Posterior vena cava (tissue), 2 donors: ENCODE measurements at regions of chr11 and their contacts with region 1.

Region 1: DNA sequence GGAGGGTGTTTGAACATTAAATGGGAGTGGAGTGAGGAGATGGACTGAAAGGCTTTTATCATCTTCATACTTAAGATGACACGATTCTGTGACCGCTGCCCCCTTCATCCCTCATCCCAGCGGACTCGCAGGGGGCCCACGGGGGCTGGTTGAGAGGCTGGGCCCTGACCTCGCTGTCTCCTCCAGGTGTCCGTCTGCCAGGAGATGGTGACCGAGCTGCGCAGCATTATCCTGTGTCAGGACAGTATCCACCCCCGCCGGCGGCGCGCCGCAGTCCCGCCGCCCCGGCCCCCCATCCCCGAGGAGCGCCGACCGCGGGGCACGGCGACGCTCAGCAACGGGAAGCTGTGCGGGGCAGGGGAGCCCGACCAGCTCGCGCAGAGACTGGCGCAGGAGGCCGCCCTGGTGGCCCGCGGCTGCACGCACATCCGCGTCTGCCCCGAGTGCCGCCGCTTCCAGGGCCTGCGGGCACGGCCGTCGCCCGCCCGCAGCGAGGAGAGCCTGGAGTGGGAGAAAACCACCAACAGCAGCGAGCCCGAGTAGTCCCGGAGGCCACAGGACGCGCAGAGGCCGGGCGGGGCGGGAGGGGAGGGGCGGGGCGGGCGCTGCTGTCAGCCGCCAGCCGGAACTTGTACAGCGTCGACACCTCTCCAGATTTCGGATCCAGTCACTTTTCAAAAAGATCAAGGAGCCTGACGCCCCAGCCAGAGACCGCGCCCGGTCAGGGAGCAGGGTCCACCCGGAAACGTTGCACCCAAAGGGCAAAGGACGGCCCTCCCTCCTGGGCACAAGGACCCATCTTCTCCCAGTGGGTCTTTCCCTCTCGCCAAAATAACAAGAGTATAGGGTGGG is 38.0 kb upstream of the TBCEL start:
- DNase-seq: peak; percentile 81

Region 2: DNA sequence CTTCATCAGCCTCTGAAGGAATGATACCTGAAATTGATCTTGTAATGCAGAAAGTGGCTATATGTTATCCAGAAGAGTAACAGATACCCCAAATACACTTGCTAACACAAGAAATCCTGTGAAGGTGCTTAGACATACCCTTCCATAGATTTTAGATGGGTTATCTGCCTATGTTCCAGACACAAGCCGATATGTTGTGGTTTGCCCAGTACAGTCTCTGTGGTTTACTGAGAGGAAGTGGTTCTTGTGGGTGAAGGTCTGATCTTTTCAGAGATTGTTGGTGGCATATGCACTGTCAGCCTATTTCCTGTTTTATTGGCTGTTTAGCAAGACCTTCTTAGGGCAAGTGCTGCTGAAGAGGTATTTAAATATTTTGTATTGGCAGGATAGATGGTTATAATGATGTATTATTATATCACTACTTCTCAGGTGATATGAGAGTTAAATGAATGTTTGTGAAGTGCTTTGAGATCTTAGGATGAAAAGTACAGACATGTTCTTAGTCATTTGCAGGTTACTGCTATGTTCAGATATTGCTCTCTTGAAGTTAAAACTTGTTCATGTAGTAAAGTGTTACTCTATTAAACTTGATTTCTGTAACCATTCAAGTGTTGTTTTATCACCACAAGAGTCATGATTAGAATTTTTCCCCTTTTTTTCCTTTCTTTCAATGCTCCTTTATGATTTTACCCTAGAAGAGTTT is 641.5 kb before region 1 on chr11:
- intact Hi-C with region 1: loop called in 1 of 2 experiments (anchors 5 kb)
- DNase-seq: no peak